ENCODE measurements at regions of chr12 and their contacts with region 1.

Region 1: DNA sequence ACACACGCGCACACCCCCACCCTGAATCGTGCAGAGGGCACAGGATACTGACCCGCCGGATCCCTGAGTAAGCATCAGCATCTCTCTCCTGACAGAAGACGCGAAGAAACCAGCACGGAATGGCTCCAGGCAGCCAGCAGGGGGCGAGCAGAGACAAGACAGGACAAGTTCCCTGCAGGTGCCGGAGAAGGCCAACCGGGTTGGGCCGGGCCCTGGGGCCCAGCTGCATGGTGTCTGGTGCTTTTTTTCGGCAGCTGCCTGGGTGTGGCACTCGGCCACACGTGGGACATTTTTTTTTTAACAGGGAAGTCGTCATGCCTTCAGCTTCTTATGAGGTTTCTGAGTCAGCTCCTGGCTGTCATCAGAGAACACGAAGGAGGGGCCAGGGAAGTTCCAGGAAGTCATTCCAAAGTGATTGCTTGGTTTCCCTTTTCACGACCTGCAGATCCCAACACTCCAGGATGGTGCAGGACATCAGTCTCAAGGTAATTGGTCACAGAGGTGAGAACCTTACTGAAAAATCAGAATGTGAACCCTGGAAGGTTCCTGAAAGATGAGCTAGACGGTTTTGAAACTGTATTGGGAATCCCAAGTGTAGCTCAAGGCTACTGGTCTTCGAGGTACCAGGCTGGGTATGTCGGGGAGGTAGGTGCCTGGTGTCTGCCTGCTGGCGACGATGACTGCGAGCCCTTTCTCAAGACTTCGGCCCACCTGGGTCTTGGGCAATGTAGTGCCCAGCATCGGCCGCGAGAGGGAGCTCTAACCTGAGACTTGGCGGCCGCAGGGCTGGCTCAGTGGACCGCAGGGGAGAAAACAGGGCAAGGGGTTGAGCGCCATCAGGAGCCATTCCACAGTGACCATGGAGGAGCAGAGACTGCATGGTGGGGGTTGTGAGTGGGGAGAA is 190.8 kb upstream of the PRMT8 start:
- DNase-seq: peak; percentile 83

Region 2: GRCh38 chr12:3288690-3289089 is 11.5 kb before region 1 on chr12:
- CTCF ChIA-PET with region 1: interaction called, 25 read pairs
- POLR2A ChIA-PET with region 1: no interaction called
- DNase-seq: no peak

Region 3: DNA sequence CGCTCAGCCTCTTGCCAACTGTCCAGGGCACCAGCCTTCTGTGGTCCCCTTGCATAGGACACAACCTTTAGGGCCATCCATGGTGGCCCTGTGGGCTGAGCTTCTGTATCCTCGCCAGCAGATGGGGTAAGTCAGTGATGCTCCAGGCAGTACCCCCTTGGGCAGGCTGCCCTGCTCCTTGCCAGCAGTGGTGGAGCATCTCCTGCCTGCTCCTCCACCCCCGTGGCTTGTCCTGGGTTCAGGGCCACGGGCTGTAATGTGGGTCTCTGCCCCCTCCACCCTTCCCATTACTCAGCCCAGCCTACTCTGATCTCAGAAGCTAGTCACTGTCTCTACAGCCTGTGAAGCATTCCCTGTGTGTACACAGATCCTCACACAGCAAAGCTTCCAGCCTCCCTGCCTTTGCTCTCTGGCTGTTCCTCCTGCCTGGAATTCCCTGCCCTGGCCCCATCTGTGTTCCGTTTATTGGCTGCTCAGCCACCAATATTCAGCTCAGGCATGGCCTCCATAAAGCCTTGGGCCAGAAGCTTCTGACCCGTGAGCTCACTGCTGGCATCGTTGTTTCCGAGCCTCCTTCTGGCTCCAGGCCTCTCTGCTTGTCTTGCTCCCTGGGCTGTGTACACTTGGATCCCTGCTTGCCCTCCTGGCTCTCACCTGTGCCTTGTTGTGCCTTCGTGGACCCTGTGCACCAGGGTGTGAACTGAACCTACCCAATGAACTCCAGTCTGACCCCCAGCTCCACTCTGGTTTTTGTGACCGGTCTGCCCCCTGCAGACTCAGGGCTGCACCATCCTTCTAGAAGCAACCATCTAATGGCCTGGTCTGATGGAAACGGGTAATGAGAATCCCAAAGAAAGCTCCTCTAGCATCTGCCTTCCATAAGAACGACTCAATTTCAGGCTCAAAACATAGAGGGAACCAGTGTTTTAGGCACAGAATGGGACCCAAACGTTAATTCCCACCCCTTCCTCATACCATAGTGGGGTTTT is 13.8 kb after region 1 on chr12:
- CTCF ChIA-PET with region 1: interaction called, 38 read pairs
- POLR2A ChIA-PET with region 1: no interaction called
- DNase-seq: peak; percentile 41

Region 4: DNA sequence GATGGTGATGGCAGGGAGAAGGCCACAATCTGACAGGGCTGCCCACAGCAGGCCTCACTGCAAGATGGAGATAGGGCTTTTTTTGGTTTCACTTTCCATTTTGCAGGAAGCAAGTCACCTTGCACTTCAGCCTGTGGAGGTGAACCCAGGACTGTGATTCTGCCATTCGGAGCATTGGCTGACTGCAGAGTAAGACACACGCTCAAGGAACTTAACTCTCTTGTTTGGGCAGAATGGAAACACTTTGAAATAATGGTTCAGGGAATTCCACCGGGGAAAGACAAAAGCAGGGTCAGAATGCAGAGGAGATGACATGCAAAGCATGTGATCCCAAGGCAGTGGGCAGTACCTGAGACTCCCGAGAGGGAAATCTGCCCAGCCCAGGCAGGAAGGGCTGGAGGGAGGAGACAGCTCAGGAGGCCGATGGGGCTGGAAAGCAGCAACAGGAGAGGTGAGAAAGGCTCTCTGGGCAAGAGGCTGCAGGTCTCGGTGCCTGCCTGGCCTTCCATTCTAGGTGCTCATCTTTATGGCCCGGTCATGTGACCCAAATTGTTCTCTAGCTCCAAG is 132.1 kb after region 1 on chr12:
- CTCF ChIA-PET with region 1: no interaction called
- POLR2A ChIA-PET with region 1: no interaction called
- DNase-seq: no peak

Region 5: DNA sequence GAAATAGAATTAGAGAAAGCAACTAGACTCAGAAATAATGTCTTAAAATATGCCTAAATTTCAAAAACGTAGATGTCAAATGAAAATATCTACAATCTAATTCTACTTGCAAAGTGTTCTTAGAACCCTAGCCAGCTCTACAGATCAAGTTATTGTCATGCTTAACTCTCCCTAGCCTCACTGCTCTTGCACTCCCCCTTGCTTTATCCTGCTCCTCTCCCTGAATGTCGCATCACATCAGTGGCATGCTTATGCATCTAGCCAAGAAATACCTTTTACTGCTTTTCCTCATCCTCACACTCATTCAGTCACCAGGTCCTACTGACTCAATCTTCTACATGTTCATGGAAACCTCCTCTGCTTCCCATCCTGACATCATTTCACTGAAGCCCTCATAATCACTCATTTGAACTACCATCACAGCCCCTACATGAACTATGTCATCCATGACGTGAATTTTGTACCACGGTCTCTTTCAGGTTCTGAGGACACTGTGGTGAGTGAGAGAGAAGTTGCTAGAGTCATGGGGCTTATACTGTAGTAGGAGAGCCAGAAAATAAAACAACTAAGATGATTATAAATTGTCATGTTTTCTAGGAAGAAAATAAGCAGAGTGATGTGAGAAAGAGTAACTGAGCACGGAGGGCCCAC is 475.3 kb after region 1 on chr12:
- CTCF ChIA-PET with region 1: interaction called, 10 read pairs
- POLR2A ChIA-PET with region 1: no interaction called
- DNase-seq: no peak

Region 6: DNA sequence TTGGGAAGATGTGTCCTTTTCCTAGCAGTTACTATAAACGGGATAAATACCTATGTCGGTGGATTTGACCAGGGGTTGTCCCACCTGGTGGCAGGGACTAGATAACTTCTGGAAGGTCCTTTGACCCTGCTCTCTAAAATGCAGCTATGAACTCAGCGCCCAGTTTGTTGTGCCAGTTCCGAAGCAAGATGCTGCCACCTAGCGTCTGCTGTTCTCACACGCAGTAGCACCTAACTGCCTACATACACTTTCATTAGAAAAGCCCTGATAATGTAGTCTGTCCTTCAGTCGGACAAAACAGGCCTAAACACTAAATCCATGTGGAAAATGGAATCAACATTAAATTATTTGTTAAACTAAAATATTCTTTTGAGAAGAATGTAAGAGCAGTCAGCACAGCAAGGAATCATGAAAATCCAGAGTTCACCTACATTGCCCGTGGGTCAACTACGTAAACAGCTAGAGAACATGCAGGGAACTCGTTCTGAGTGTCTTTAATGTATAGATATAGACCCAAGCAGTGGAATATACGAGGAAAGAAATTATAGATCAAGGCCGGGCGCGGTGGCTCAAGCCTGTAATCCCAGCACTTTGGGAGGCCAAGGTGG is 503.8 kb after region 1 on chr12:
- CTCF ChIA-PET with region 1: interaction called, 38 read pairs
- POLR2A ChIA-PET with region 1: no interaction called
- DNase-seq: peak; percentile 71

Measured in HEK293T (cell line).